Ascending aorta (tissue), 2 donors: ENCODE measurements at regions of chr2 and their contacts with region 1.

Region 1: GRCh38 chr2:129877289-129877779 is 102.1 kb upstream of the RAB6C start:
- DNase-seq: peak; percentile 81 to 95
- H3K4me3 ChIP-seq: peak overlapping the region; percentile 82 to 86
- H3K27ac ChIP-seq: peak overlapping the region; percentile 75 to 80
- H3K4me1 ChIP-seq: peaks cover 0 to 11% of the 10 kb centered on the region in 2 donors
- H3K27me3 ChIP-seq: no peaks in the 10 kb centered on the region
- CTCF ChIP-seq: no peak

Region 2: DNA sequence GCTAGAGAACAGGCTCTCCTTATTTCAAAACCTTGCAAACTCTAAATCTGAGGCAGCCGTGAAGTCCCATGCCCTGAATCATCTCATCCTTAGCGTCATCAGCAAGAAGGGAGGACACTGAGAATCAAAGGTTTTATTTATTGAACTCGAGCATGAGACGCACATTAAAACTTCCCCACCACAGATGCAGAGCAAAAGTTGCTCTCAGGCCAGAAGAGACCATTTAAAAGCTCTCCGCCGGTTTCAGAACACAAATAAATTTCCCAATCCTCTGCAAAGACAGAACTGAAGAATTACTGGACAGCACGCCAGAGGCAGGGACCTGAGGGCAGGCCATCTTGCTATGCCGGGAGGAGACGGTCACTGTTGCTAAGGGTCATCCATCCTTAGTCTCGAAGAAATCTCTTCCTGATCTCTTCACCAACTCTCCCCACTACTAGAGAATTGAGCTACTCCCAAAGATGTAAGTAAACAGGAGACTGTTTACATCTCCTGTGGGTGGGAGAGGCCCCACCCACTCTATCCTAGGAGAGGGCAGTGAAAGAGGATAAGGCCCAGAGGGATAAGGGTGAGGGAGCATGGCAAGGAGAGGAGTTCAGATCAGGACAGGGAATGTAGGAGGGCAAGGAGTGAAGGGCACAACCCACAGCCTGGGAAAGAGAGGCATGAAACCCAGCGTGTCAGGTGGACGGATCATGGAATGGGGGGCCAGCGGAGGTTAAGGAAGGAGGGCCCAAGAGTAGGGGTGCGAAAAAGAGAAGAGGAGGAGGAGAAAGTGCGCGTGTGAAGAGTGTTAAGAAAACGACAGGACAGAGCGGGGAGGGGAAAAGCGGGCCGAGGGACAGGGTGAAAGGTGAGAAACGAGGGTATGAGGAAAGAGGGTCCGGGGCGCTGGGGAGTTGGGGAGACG is 1992.6 kb before region 1 on chr2:
- intact Hi-C with region 1: loop called (anchors 10 kb)
- DNase-seq: no peak
- H3K4me3 ChIP-seq: peak overlapping the region; percentile 67 to 69
- H3K27ac ChIP-seq: peak overlapping the region; percentile 85 to 88
- H3K4me1 ChIP-seq: peaks cover 9 to 33% of the 10 kb centered on the region in 2 donors
- H3K27me3 ChIP-seq: no peaks in the 10 kb centered on the region
- CTCF ChIP-seq: no peak

Region 3: GRCh38 chr2:129936334-129936934 is 59.1 kb after region 1 on chr2:
- intact Hi-C with region 1: no loop called
- DNase-seq: no peak
- H3K4me3 ChIP-seq: no peak overlapping the region
- H3K27ac ChIP-seq: no peak overlapping the region
- H3K4me1 ChIP-seq: no peaks in the 10 kb centered on the region
- H3K27me3 ChIP-seq: no peaks in the 10 kb centered on the region
- CTCF ChIP-seq: no peak

Region 4: GRCh38 chr2:130727286-130728018 is 850.1 kb after region 1 on chr2:
- intact Hi-C with region 1: loop called (anchors 5 kb)
- DNase-seq: peak; percentile 46 to 91
- H3K4me3 ChIP-seq: peak overlapping the region; percentile 64 to 67
- H3K27ac ChIP-seq: peak overlapping the region; percentile 73 to 86
- H3K4me1 ChIP-seq: peaks cover 7 to 15% of the 10 kb centered on the region in 2 donors
- H3K27me3 ChIP-seq: no peaks in the 10 kb centered on the region
- CTCF ChIP-seq: no peak